ENCODE measurements at regions of chr3 and their contacts with region 1.

Region 1: DNA sequence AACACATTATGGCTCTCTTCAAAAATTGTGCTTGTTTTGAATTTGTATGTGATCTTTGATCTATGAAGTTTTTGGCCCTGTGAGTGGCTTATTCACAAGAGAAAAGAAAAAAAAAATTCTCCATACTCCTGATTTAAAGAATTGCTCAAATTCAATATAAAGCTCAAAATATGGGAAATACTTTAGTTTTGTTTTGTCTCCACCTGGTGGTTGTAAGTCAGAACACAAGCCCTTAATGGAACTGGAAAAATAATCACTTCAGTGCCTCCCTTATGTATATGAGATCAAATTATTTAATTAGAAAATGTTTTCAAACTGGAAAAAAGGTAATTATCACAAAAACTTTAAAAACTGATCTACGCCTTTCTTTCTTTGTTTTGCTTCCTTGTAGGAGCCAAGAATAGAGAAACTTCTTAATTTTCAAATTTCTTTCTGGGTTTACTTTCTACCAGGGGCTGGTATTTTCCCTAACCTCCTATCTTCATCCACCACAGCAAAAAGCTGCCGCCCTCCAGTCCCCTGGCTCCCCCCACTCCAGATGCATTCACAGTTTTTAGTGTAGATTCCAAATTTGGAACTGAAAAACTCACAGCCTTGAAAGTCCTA is 50.6 kb downstream of the SERP1 start:
- DNase-seq: peak in 2 of 35 experiments; percentile 16 to 73
- ATAC-seq: peak in 1 of 4 experiments; percentile 55
- H3K4me3 ChIP-seq: no peak overlapping the region
- H3K4me3 Mint-ChIP-seq: no peak overlapping the region
- H3K27ac ChIP-seq: no peak overlapping the region
- H3K27ac Mint-ChIP-seq: no peak overlapping the region
- H3K4me1 ChIP-seq: no peaks in the 10 kb centered on the region
- H3K4me1 Mint-ChIP-seq: no peaks in the 10 kb centered on the region
- H3K27me3 ChIP-seq: peaks cover 0 to 2% of the 10 kb centered on the region in 2 experiments
- H3K27me3 Mint-ChIP-seq: no peaks in the 10 kb centered on the region

Region 2: DNA sequence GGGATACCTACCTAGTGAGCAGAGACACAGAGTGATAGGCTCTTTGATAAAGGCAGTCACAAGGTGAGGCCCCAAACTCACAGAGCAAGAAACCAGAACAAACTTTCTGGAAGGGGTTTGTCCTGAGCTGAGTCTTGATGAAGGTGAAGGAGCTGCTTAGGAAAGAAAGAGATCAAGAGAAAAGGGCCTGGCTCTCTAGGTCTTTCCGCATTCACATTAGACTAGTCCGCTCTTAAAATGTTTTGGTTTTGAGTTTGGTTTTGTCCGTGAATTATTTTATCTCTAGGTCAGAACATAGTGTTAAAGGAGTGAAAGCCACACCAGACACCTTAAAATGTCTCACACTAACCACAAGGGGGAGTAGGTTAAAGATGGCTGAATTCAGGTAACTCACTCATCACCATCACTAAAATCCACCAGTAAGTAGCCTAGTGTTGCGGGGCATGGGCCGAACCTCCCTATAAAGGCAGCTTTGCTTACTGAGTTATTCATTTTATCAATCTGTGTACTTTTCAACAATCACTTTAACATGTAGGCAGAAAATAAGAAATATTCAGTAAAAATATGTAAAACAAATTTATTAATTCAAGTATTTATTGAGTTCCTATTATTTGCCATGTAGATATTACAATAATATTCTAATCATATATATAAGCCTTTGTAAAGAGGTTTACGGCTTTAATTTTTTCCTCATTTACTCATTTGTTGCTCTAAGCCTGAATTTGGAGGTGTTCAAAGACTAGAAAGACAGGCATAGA is 209.1 kb before region 1 on chr3:
- CTCF ChIA-PET with region 1: interaction called, 9 to 19 read pairs
- POLR2A ChIA-PET with region 1: interaction called in 1 of 2 experiments, 8 read pairs
- DNase-seq: peak in 9 of 35 experiments; percentile 0 to 66 (median 3)
- ATAC-seq: peak; percentile 68 to 75 (median 72)
- H3K4me3 ChIP-seq: no peak overlapping the region
- H3K4me3 Mint-ChIP-seq: no peak overlapping the region
- H3K27ac ChIP-seq: no peak overlapping the region
- H3K27ac Mint-ChIP-seq: no peak overlapping the region
- H3K4me1 ChIP-seq: no peaks in the 10 kb centered on the region
- H3K4me1 Mint-ChIP-seq: no peaks in the 10 kb centered on the region
- H3K27me3 ChIP-seq: no peaks in the 10 kb centered on the region
- H3K27me3 Mint-ChIP-seq: peaks cover 10 to 18% of the 10 kb centered on the region in 2 donors

Region 3: DNA sequence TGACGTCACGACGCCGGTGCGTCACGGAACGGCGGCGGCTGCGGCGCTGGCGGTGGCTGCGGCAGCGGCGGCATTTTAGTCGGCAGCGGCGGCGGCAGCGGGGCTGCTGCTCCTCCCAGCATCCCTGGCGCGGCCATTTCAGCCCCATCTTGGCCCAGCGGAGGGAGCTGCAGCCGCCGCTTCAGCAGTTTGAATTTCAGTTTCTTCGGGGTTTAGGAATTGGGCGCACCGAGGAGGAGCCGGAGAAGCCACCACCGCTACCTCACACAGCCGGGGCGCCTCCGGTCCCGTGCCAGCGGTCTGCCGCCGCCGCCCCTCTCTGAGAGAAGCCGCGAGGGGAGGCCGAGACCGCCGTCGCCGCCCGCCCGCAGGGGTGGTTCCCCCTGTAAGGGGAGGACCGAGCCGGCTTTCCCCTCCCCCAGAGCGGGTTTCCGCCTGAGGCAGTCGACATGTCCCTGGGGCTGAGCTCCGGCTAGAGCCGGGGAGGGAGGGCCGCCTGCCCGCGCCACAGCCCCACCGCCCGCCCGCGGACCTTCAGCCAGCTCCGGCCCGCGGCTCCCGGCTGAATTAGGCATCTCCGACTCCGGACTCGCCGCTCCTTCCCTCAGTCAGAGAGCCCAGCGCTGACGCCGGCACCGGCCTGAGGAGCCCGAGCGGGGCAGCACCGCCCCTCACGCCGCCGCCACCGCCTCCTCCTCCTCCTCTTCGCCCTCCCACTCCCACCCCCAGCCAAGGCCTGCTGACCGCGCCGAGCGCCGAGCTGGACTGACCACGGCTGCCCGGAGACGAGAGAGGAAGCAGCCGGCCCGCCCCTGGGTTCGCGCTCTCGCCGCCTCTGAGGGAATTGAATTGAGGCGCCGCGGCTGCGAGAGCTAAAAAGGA is 87.2 kb before region 1 on chr3 and contains the start of gene TSC22D2:
- CTCF ChIA-PET with region 1: interaction called in 1 of 2 experiments, 39 read pairs
- POLR2A ChIA-PET with region 1: no interaction called
- DNase-seq: peak; percentile 89 to 99 (median 96)
- ATAC-seq: peak; percentile 78 to 81 (median 79)
- H3K4me3 ChIP-seq: peak within 1 kb of the TSS; percentile 80 to 93
- H3K4me3 Mint-ChIP-seq: peak within 1 kb of the TSS; percentile 87 to 95 (median 92)
- H3K27ac ChIP-seq: peak within 1 kb of the TSS; percentile 92
- H3K27ac Mint-ChIP-seq: peak within 1 kb of the TSS; percentile 95 to 98
- H3K4me1 ChIP-seq: peaks cover 8 to 19% of the 10 kb centered on the region in 2 experiments
- H3K4me1 Mint-ChIP-seq: peaks cover 33 to 44% (median 35%) of the 10 kb centered on the region in 3 donors
- H3K27me3 ChIP-seq: no peaks in the 10 kb centered on the region
- H3K27me3 Mint-ChIP-seq: no peaks in the 10 kb centered on the region
- total RNA-seq, gene TSC22D2: 21.2 to 55.0 (median 23.3) TPM

Region 4: DNA sequence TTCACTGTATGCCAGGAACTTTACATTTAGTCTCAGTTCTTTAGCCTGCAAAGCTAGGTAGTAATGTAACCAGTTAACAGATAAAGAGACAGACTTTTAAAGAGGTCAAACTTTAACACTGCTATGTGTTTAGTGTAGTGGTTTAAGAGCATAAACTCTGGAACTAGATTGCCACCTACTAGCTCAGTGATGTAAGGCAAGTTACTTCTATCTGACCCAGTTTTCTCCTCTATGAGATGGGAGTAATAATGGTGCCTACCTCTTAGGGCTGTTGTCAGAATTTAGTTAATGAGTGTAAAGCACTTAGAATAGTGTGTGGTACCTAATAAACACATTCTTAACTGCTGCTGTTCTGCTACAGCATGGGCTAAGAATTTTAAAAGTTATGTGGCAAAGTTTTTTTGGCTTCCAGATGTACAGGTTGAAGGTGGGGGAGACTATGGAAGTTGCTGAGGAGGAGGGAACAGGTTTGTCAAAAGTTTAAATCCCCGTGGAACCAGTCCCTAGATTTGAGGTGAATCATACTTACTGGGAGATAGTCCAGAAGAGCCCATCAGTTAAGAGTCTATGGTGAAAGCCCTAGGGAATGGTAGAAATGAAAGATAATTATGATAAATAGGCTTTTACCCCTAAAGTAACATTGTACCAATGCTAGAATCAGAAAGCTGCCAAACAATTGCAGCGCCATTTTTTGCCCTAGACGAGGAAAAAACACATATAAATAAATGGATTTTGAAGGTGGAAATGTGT is 73.7 kb before region 1 on chr3:
- CTCF ChIA-PET with region 1: interaction called in 1 of 2 experiments, 3 read pairs
- POLR2A ChIA-PET with region 1: interaction called in 1 of 2 experiments, 18 read pairs
- DNase-seq: no peak
- ATAC-seq: peak in 1 of 4 experiments; percentile 42
- H3K4me3 ChIP-seq: no peak overlapping the region
- H3K4me3 Mint-ChIP-seq: no peak overlapping the region
- H3K27ac ChIP-seq: no peak overlapping the region
- H3K27ac Mint-ChIP-seq: peak overlapping the region in 1 of 2 donors; percentile 11
- H3K4me1 ChIP-seq: peaks cover 0 to 6% of the 10 kb centered on the region in 2 experiments
- H3K4me1 Mint-ChIP-seq: peaks cover 65 to 71% (median 70%) of the 10 kb centered on the region in 3 donors
- H3K27me3 ChIP-seq: no peaks in the 10 kb centered on the region
- H3K27me3 Mint-ChIP-seq: no peaks in the 10 kb centered on the region

Region 5: GRCh38 chr3:150462108-150462507 is 33.6 kb before region 1 on chr3:
- CTCF ChIA-PET with region 1: interaction called in 1 of 2 experiments, 10 read pairs
- POLR2A ChIA-PET with region 1: no interaction called
- DNase-seq: no peak
- ATAC-seq: no peak
- H3K4me3 ChIP-seq: no peak overlapping the region
- H3K4me3 Mint-ChIP-seq: no peak overlapping the region
- H3K27ac ChIP-seq: no peak overlapping the region
- H3K27ac Mint-ChIP-seq: no peak overlapping the region
- H3K4me1 ChIP-seq: no peaks in the 10 kb centered on the region
- H3K4me1 Mint-ChIP-seq: no peaks in the 10 kb centered on the region
- H3K27me3 ChIP-seq: no peaks in the 10 kb centered on the region
- H3K27me3 Mint-ChIP-seq: no peaks in the 10 kb centered on the region